ENCODE measurements at regions of chr19 and their contacts with region 1.

Region 1: DNA sequence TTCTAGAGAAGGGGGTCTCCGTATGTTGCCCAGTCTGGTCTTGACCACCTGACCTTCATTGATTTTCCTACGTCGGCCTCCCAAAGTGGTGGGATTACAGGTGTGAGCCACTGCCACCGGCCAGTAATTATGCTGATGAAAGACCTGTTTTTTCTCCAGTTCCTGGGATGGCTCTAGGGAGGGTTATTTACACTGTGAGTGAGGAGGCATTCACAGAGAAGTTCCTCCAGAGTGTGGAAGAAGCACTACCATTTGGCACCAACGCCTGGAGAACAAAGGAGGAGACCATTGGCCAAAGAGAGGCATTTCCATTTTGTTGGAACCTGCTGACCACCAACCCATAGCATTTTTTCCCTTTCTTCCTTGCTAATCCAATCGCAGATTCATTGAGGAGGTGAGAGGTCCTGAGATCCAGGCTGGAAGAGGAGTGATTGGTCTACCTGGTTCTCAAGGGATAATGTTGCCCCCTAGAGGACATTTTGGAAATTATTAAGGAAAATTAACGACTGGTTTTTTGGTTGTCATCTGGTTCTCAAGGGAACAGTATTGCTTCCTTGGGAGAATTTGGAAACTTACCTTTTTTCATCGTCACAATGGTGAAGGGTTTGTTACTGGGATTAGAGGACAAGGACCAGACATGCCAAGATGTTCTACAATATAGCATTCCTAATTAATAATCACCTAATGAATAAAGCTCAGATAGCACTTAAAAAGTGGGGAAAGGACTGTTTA is 5.5 kb upstream of the SAE1 start:
- DNase-seq: peak in 7 of 9 donors; percentile 31 to 65 (median 53)
- ATAC-seq: peak; percentile 79
- H3K4me3 ChIP-seq: no peak overlapping the region
- H3K4me3 Mint-ChIP-seq: no peak overlapping the region
- H3K27ac ChIP-seq: no peak overlapping the region
- H3K27ac Mint-ChIP-seq: no peak overlapping the region
- H3K4me1 ChIP-seq: peaks cover 0 to 4% of the 10 kb centered on the region in 2 donors
- H3K4me1 Mint-ChIP-seq: peaks cover 0 to 11% (median 7%) of the 10 kb centered on the region in 7 donors
- H3K27me3 ChIP-seq: no peaks in the 10 kb centered on the region
- H3K27me3 Mint-ChIP-seq: peaks cover 0 to 6% (median 0%) of the 10 kb centered on the region in 5 donors

Region 2: DNA sequence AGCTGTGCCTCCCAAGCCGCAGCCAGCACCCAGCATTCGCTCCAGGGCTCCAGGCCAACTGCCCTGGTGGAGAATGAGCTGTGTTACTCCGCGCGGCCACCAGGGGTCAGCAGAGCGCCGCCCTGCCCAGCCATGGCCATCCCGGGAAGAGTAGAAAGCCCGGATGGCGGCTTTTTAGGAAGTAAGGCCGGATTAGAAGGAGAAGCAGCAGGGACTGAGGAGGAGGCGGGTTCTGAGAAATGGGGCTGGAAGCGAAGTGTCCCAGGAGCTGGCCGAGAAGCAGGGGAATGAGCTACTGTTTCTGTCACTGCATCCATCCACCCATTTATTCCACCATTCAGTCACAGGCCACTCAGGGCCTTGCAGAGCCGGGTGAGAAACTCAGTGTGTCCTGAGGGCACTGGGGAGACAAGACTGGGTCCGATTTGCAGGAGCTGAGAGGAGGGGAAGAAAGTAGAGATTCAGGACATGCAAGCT is 112.0 kb before region 1 on chr19:
- CTCF ChIA-PET with region 1: interaction called, 13 read pairs
- POLR2A ChIA-PET with region 1: interaction called, 3 read pairs
- intact Hi-C with region 1: loop called in 1 of 2 experiments (anchors 1 kb)
- DNase-seq: peak in 8 of 9 donors; percentile 30 to 76 (median 55)
- ATAC-seq: peak; percentile 92
- H3K4me3 ChIP-seq: no peak overlapping the region
- H3K4me3 Mint-ChIP-seq: peak overlapping the region in 1 of 10 donors; percentile 12
- H3K27ac ChIP-seq: no peak overlapping the region
- H3K27ac Mint-ChIP-seq: peak overlapping the region in 1 of 9 donors; percentile 71
- H3K4me1 ChIP-seq: peaks cover 0 to 3% of the 10 kb centered on the region in 2 donors
- H3K4me1 Mint-ChIP-seq: peaks cover 5 to 11% (median 9%) of the 10 kb centered on the region in 7 donors
- H3K27me3 ChIP-seq: no peaks in the 10 kb centered on the region
- H3K27me3 Mint-ChIP-seq: peaks cover 9 to 21% (median 11%) of the 10 kb centered on the region in 5 donors

Region 3: DNA sequence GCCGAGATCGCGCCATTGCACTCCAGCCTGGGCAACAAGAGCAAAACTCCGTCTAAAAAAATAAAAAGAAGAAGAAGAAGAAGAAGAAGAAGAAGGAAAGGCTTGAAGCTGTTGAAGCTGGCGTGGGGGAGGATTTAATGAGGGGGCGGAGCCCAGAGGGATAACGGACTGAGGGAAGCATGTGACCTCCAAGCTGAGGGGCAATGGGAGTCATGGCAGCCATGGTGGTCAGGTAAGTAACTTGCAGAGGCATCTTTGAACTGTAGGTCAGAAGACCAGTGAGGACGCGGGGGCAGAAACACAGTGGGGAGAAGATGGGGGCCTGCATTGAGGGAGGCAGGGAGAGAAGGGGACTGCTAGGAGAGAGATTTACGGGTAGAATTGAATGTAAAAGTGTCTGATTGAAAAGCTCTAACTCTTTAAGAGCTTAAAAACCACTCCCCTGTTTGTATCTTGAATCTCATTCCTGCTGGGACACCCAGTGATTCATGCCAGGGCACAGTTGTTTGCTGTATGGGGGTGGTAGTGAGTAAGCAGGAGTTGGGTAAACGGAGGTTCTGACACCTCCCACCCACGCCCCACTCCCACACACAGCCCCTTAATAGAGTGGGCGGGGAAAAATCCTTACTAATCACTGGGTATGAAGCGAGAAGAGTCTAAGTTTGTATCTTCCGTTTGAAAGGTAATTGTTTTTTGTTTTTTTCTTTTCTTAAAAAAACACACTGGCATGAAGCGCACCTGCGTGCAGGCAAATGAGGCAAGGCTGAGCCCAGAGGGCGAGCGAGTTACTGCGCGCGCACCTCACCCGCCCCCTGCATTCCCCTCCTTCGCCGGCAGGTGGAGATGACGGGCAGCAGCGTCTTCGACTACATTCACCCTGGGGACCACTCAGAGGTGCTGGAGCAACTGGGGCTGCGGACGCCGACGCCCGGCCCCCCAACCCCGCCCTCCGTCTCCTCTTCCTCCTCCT is 89.7 kb before region 1 on chr19:
- CTCF ChIA-PET with region 1: interaction called, 4 read pairs
- POLR2A ChIA-PET with region 1: no interaction called
- intact Hi-C with region 1: loop called (anchors 1 kb)
- DNase-seq: peak; percentile 91 to 100 (median 97)
- ATAC-seq: peak; percentile 99
- H3K4me3 ChIP-seq: peak overlapping the region; percentile 74
- H3K4me3 Mint-ChIP-seq: peak overlapping the region; percentile 83 to 97 (median 92)
- H3K27ac ChIP-seq: peak overlapping the region; percentile 62
- H3K27ac Mint-ChIP-seq: peak overlapping the region; percentile 71 to 93 (median 85)
- H3K4me1 ChIP-seq: peaks cover 11 to 13% of the 10 kb centered on the region in 2 donors
- H3K4me1 Mint-ChIP-seq: peaks cover 7 to 23% (median 16%) of the 10 kb centered on the region in 7 donors
- H3K27me3 ChIP-seq: no peaks in the 10 kb centered on the region
- H3K27me3 Mint-ChIP-seq: peaks cover 6 to 26% (median 14%) of the 10 kb centered on the region in 5 donors

Region 4: DNA sequence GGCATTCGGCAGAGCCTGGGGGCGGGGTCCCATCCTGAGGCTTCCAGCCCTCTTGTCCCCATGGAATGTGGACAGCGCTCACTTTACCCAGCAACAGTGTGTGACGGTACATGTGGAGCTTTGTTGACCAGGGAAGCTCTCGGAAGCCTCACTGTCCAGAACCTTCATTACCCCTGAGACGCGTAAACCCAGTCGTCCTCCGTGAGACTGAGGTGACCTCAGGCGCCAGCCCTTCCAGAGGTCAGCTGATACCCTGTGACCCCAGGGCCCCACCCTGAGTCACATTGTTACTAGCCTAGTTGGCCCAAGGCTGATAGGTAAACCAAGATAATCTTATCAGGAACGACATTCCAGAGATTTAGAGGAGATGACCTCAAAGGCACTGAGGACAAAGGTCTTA is 66.5 kb before region 1 on chr19:
- CTCF ChIA-PET with region 1: no interaction called
- POLR2A ChIA-PET with region 1: no interaction called
- intact Hi-C with region 1: no loop called
- DNase-seq: no peak
- ATAC-seq: no peak
- H3K4me3 ChIP-seq: no peak overlapping the region
- H3K4me3 Mint-ChIP-seq: no peak overlapping the region
- H3K27ac ChIP-seq: no peak overlapping the region
- H3K27ac Mint-ChIP-seq: no peak overlapping the region
- H3K4me1 ChIP-seq: no peaks in the 10 kb centered on the region
- H3K4me1 Mint-ChIP-seq: peaks cover 0 to 1% (median 0%) of the 10 kb centered on the region in 7 donors
- H3K27me3 ChIP-seq: no peaks in the 10 kb centered on the region
- H3K27me3 Mint-ChIP-seq: peaks cover 0 to 10% (median 0%) of the 10 kb centered on the region in 5 donors

Region 5: GRCh38 chr19:47075179-47075810 is 49.8 kb before region 1 on chr19:
- CTCF ChIA-PET with region 1: interaction called, 40 read pairs
- POLR2A ChIA-PET with region 1: interaction called, 6 read pairs
- intact Hi-C with region 1: loop called (anchors 1 kb)
- DNase-seq: no peak
- ATAC-seq: peak; percentile 74
- H3K4me3 ChIP-seq: no peak overlapping the region
- H3K4me3 Mint-ChIP-seq: no peak overlapping the region
- H3K27ac ChIP-seq: no peak overlapping the region
- H3K27ac Mint-ChIP-seq: peak overlapping the region in 4 of 9 donors; percentile 19 to 76 (median 48)
- H3K4me1 ChIP-seq: no peaks in the 10 kb centered on the region
- H3K4me1 Mint-ChIP-seq: peaks cover 6 to 29% (median 14%) of the 10 kb centered on the region in 7 donors
- H3K27me3 ChIP-seq: no peaks in the 10 kb centered on the region
- H3K27me3 Mint-ChIP-seq: no peaks in the 10 kb centered on the region

Region 6: GRCh38 chr19:47081111-47081510 is 44.0 kb before region 1 on chr19:
- CTCF ChIA-PET with region 1: interaction called, 40 read pairs
- POLR2A ChIA-PET with region 1: interaction called, 6 read pairs
- intact Hi-C with region 1: loop called (anchors 1 kb)
- DNase-seq: no peak
- ATAC-seq: no peak
- H3K4me3 ChIP-seq: no peak overlapping the region
- H3K4me3 Mint-ChIP-seq: no peak overlapping the region
- H3K27ac ChIP-seq: no peak overlapping the region
- H3K27ac Mint-ChIP-seq: peak overlapping the region in 3 of 9 donors; percentile 8 to 67 (median 47)
- H3K4me1 ChIP-seq: no peaks in the 10 kb centered on the region
- H3K4me1 Mint-ChIP-seq: peaks cover 0 to 18% (median 0%) of the 10 kb centered on the region in 7 donors
- H3K27me3 ChIP-seq: no peaks in the 10 kb centered on the region
- H3K27me3 Mint-ChIP-seq: no peaks in the 10 kb centered on the region

Region 7: DNA sequence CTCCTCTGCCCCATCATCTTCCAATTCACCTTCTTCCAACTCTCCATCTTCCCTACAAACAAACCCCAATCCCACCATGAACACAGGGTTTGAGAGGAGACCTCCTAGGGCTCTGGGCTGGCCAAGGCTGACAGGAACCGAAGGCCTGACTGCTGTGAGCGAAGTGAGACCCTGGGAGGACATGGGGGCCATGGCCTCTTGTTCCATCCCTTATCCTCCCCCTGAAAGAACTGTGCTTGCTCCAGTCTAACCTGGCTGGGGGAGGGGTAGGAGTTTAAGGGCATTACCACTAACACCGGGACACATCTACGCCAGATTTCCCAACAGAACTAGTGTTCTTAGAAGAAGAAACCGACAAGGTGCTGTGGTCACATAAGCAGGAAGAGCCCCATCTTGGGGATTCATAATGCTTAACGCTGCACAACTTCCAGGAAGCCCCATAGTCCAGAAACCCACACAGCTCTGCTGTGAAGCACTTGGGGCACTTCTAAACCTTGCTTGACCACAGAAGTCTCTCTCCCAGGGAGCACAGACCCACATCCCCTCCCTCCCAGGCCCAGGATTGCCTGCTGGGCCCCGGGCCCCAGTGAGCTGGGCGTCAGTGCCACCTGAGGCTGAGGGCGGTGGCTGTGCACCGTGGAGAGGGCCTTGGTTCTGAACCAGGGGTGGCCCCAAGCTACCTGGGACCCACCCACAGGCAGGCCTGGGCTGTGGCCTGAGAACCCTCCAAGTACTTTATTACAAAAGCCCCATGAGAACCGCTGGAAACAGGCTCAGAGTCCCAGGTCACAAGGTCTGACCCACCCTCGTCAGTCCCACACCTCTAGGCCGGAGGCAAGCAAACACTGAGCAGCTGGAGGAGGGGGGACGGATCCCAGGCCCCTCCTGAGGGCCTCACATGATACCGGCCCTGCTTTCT is 30.3 kb before region 1 on chr19:
- CTCF ChIA-PET with region 1: interaction called, 6 read pairs
- POLR2A ChIA-PET with region 1: interaction called, 4 read pairs
- intact Hi-C with region 1: loop called in 1 of 2 experiments (anchors 2 kb)
- DNase-seq: peak in 5 of 9 donors; percentile 15 to 67 (median 23)
- ATAC-seq: peak; percentile 74
- H3K4me3 ChIP-seq: peak overlapping the region; percentile 28
- H3K4me3 Mint-ChIP-seq: peak overlapping the region in 8 of 10 donors; percentile 16 to 93 (median 62)
- H3K27ac ChIP-seq: peak overlapping the region; percentile 64
- H3K27ac Mint-ChIP-seq: peak overlapping the region; percentile 82 to 99 (median 92)
- H3K4me1 ChIP-seq: peaks cover 19 to 21% of the 10 kb centered on the region in 2 donors
- H3K4me1 Mint-ChIP-seq: peaks cover 36 to 77% (median 43%) of the 10 kb centered on the region in 7 donors
- H3K27me3 ChIP-seq: no peaks in the 10 kb centered on the region
- H3K27me3 Mint-ChIP-seq: no peaks in the 10 kb centered on the region

Measured in naive thymus-derived CD4-positive, alpha-beta T cell (primary cell).